Sigmoid colon (tissue), 7 donors: ENCODE measurements at regions of chr3 and their contacts with region 1.

Region 1: DNA sequence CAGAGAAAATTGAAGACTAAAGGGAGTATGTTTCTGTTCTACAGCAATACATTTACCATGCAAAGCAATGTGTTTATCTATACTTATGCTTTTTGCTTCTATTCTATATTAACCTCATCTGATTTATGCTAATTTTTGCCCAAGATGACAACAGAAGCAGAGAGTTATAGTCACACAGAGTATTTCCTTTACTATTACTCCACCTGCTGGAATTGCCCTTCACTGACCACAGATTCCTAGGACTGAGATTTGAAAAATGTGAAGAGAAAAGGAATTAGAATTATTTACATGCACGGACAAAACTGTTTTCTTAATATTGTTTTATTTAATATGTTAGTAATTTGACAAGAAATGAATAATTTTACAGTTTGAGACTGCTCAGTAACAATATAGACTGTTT is 745.6 kb downstream of the VGLL3 start:
- DNase-seq: no peak
- H3K4me3 ChIP-seq: peak overlapping the region in 1 of 4 donors; percentile 15
- H3K27ac ChIP-seq: peak overlapping the region in 3 of 4 donors; percentile 10 to 44 (median 24)
- H3K4me1 ChIP-seq: peaks cover 0 to 18% (median 6%) of the 10 kb centered on the region in 4 donors
- H3K27me3 ChIP-seq: no peaks in the 10 kb centered on the region
- CTCF ChIP-seq: peak in 3 of 4 experiments; percentile 16 to 46 (median 20)
- EP300 ChIP-seq: no peak
- POLR2A ChIP-seq: no peak

Region 2: DNA sequence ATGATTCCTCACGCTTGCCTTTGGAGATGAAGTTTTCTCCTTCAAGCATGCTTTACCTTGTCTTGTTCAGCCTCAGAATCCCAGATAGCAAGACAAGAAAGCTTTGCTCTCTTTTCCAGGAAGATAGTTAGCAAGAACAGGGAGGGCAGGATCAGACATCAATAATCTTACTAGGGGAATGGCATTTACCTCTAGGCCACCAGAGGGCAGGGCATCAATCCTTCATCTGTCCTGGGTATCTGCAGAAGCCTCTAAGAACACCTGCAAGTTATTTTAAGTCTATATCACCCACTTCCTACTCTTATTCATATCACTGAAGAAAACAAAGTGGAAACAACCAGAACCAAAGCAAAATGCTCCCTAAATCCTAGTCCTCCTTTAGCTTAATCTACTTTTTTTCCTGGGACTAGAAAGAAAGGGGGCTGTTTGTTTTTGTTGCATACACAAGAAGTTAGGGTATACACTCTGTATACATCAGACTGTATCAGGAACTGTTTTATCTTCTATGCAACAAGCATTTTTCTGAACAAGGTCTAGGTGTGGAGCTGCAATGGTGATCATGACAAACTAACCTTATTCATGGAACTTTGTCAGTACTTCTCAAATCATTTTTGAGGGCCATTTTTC is 424.1 kb before region 1 on chr3:
- intact Hi-C with region 1: loop called (anchors 10 kb)
- DNase-seq: no peak
- H3K4me3 ChIP-seq: no peak overlapping the region
- H3K27ac ChIP-seq: no peak overlapping the region
- H3K4me1 ChIP-seq: no peaks in the 10 kb centered on the region
- H3K27me3 ChIP-seq: no peaks in the 10 kb centered on the region
- CTCF ChIP-seq: peak in 2 of 4 experiments; percentile 21 to 54
- EP300 ChIP-seq: no peak
- POLR2A ChIP-seq: no peak

Region 3: GRCh38 chr3:86464180-86464579 is 218.8 kb after region 1 on chr3:
- intact Hi-C with region 1: no loop called
- DNase-seq: no peak
- H3K4me3 ChIP-seq: no peak overlapping the region
- H3K27ac ChIP-seq: no peak overlapping the region
- H3K4me1 ChIP-seq: no peaks in the 10 kb centered on the region
- H3K27me3 ChIP-seq: no peaks in the 10 kb centered on the region
- CTCF ChIP-seq: no peak
- EP300 ChIP-seq: no peak
- POLR2A ChIP-seq: no peak